ENCODE measurements at regions of chr9 and their contacts with region 1.

Region 1: DNA sequence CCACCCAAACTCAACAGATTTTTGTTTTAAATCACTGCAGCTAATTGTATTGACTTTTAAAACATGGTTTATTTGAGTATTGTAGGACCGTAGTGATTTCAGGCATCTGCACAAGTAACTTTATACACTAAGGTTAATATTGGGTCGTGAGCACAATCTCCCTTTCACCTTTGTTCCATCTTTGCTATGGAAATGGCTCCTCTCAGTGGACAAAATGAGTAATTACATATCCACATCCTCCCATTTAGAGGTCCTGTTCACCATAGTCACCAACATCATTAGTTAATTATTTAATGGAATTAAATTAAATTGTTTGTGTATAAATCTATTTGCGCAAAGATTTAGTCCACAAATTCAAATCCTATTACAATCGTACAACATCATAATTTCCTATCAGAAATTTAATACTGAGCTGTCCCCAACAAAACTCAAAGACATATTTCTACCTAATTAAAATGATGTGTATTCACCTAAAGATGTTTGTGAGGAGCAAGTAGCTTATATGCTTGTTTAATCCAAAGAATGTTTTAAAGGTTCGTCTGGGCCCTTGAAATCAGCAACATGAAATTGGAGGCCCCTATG is 173.0 kb upstream of the DAPK1 start:
- DNase-seq: no peak
- H3K4me3 Mint-ChIP-seq: no peak overlapping the region
- H3K27ac Mint-ChIP-seq: no peak overlapping the region
- H3K4me1 Mint-ChIP-seq: no peaks in the 10 kb centered on the region
- H3K27me3 Mint-ChIP-seq: peaks cover 15% of the 10 kb centered on the region

Region 2: DNA sequence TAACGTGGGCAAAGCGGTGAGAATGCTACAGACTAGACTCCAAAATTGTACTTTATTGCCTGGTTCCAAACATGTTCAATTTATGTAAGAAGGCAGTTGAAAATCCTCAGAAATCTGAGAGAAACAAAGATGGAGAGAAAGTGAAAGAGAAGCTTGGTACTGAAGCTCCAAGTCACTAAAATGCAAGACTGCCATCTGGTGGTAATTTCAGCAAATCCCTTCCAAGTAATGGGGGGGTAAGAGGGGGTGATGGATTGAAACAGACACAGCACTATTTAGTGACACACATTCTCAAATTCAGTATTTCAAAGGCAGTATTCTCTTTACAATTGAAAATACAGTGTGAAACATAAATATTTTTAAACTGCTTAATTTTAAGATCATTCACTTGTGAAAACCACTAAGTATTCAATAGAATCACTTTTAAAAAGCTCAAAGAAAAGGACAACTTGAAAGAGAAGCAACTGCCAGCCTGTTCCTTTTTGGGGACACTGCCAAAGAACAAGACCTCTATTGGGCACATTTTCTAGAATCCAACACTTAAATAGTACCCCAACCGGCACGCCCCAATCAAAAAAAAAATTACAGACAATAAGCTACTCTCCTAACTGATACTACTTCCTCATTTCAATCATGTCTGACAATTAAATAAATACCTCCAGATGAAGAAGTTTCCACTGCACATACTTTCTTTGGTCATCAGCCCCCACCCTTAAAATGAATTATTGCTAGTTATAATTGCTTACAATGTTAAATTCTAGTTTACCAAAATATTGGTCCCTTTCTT is 1714.4 kb before region 1 on chr9:
- CTCF ChIA-PET with region 1: no interaction called
- intact Hi-C with region 1: no loop called
- DNase-seq: peak; percentile 53
- H3K4me3 Mint-ChIP-seq: peak overlapping the region; percentile 17
- H3K27ac Mint-ChIP-seq: peak overlapping the region; percentile 74
- H3K4me1 Mint-ChIP-seq: peaks cover 6% of the 10 kb centered on the region
- H3K27me3 Mint-ChIP-seq: no peaks in the 10 kb centered on the region

Region 3: GRCh38 chr9:86202338-86202882 is 1122.3 kb before region 1 on chr9:
- CTCF ChIA-PET with region 1: no interaction called
- intact Hi-C with region 1: loop called (anchors 1 kb)
- DNase-seq: peak; percentile 23
- H3K4me3 Mint-ChIP-seq: no peak overlapping the region
- H3K27ac Mint-ChIP-seq: no peak overlapping the region
- H3K4me1 Mint-ChIP-seq: no peaks in the 10 kb centered on the region
- H3K27me3 Mint-ChIP-seq: peaks cover 3% of the 10 kb centered on the region

Region 4: DNA sequence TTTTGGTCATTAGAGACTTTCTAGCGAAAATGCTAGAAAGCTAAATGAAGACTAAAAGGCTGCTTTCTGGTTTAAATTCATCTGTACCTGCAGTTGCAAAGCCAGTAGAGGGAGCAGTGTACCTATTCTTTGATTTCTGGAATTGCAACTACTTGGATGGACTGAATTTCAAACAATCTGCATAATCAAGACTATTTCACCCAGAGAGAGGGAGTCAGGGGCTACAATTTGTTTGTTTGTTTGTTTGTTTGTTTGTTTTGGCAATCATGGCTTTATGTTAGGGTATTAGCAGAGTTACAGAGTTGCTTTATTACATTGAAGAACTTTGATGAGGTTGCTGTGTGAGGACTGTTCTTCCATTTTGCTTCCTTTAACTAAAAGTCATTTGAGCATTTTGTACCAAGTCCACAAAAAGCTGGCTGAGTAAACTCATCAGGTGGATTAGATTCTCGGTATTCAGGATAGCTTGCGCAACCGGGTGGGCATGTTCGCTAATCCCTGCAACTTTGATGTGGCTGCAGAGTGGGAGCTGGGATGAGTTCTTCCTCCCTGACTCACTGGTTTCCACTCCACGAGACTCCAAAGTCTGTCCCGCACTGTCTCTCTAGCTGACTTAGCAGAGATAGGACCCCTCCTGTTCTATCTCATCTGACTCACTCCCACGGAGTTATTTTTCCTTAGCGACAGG is 890.5 kb before region 1 on chr9:
- CTCF ChIA-PET with region 1: interaction called, 3 read pairs
- intact Hi-C with region 1: loop called (anchors 1 kb)
- DNase-seq: no peak
- H3K4me3 Mint-ChIP-seq: no peak overlapping the region
- H3K27ac Mint-ChIP-seq: no peak overlapping the region
- H3K4me1 Mint-ChIP-seq: no peaks in the 10 kb centered on the region
- H3K27me3 Mint-ChIP-seq: peaks cover 16% of the 10 kb centered on the region

Region 5: GRCh38 chr9:86614871-86615849 is 709.5 kb before region 1 on chr9:
- CTCF ChIA-PET with region 1: no interaction called
- intact Hi-C with region 1: loop called (anchors 1 kb)
- DNase-seq: peak; percentile 19
- H3K4me3 Mint-ChIP-seq: no peak overlapping the region
- H3K27ac Mint-ChIP-seq: no peak overlapping the region
- H3K4me1 Mint-ChIP-seq: no peaks in the 10 kb centered on the region
- H3K27me3 Mint-ChIP-seq: peaks cover 15% of the 10 kb centered on the region

Region 6: DNA sequence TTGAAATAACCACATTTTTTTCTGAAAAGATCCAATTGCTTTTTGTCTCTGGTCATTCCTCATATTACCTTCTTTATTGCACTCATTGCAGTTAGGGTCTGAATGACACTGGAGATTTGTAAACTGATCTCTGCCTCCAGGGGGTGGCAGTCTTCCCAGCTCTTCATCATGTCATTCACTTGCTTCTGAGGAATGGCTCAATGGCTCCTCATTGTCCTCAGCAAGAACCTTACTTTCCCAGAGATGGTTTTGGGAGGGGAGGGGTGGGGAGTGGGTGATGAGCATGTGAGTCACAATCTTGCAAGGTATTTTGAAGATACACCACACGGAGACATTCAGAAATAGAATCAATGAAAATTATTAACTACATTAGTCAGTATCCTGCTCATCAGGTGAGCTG is 217.6 kb before region 1 on chr9:
- CTCF ChIA-PET with region 1: no interaction called
- intact Hi-C with region 1: loop called (anchors 2 kb)
- DNase-seq: no peak
- H3K4me3 Mint-ChIP-seq: no peak overlapping the region
- H3K27ac Mint-ChIP-seq: no peak overlapping the region
- H3K4me1 Mint-ChIP-seq: no peaks in the 10 kb centered on the region
- H3K27me3 Mint-ChIP-seq: peaks cover 21% of the 10 kb centered on the region

Region 7: GRCh38 chr9:87184956-87185642 is 139.6 kb before region 1 on chr9:
- CTCF ChIA-PET with region 1: no interaction called
- intact Hi-C with region 1: no loop called
- DNase-seq: no peak
- H3K4me3 Mint-ChIP-seq: no peak overlapping the region
- H3K27ac Mint-ChIP-seq: no peak overlapping the region
- H3K4me1 Mint-ChIP-seq: no peaks in the 10 kb centered on the region
- H3K27me3 Mint-ChIP-seq: peaks cover 24% of the 10 kb centered on the region